Esophagus squamous epithelium (tissue), 5 donors: ENCODE measurements at regions of chr5 and their contacts with region 1.

Region 1: DNA sequence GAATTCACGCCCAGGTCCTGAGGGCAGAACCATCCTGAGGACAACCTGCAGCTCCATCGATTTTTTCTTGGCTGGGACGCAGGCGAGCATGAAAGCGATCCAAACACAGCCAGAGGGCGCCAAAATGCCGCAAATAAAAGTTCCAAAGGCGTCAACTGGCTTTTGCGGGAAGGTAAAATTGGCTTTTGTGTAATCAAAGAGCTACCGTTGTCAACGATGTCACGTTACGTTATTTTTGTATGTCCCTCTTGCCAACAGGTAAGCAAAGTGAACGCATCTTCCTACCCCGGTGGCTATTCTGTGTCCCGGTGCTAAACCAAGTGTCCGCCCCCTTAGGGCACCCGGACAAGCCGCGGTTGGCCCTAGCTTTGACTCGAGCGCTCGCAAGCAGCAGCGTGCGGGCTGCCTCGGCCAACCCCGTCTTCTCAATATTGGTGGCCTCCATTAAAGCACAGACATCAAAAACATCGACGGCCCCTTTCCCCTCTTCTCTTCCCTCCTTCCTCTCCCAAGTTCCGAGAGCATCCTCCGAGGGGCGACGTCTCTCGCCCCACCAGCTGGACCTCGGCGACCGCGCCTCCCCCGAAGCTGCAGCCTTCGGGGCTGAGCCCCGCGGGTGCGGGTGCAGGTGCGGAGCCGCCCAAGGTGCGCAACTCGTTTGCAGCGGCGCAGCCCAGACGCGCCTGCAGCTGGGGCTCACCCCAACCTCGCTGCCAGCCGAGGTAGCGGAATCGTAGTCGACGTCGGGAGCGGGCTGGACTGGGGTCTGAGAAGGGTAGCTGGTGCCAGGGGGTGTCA is 1.1 kb upstream of the BASP1 start:
- DNase-seq: peak; percentile 29
- H3K4me3 ChIP-seq: peak overlapping the region in 3 of 4 donors; percentile 64 to 77 (median 70)
- H3K27ac ChIP-seq: peak overlapping the region in 3 of 4 donors; percentile 15 to 82 (median 56)
- H3K4me1 ChIP-seq: peaks cover 8 to 31% (median 8%) of the 10 kb centered on the region in 3 donors
- H3K27me3 ChIP-seq: peaks cover 0 to 50% (median 2%) of the 10 kb centered on the region in 4 donors
- CTCF ChIP-seq: peak; percentile 67 to 86 (median 79)
- POLR2A ChIP-seq: no peak

Region 2: GRCh38 chr5:17157916-17158529 is 58.4 kb before region 1 on chr5:
- intact Hi-C with region 1: no loop called
- DNase-seq: no peak
- H3K4me3 ChIP-seq: no peak overlapping the region
- H3K27ac ChIP-seq: no peak overlapping the region
- H3K4me1 ChIP-seq: peaks cover 0 to 10% (median 0%) of the 10 kb centered on the region in 3 donors
- H3K27me3 ChIP-seq: no peaks in the 10 kb centered on the region
- CTCF ChIP-seq: peak in 1 of 6 experiments; percentile 11
- POLR2A ChIP-seq: no peak

Region 3: DNA sequence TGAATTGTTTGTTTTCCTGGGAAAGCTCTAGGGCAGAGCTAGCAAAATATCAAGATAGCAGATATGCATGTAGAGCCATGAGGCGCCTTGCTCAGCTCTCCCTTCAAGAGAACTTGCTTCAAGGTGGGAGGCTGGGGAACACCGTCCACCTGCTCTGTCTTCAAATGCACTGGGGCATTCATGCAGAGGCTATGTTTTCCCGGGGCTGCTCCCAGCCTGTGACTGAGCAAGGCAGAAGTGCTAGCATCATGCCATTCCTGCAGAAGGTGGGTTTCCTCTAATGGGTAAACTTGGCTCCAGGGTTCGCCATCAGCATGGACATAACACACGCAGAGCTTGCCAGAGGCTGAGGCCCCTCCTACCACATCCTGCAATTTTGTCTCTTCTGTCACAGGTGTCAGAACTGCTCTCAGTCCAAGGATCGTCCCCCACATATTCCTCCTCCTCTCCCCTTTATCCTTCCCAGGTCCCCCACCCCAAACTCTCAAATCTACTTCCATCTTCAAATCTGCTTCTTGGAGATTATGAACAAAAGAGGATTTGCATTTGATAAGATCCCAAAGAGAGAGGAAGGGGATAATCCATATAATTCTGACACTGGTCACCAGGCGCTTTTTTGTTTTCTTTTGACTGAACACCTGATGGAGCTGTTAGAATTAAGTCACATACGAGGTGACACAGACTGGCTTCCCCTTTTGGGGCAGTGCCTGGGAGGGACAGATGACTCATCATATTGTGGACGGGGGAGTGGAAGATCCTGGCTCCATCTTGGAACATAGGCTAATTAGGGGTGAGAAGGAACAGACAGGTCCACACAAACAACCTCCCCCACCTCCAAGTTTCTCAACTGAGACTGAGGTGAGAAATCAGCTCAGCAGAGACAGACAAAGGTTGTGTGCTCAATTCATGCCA is 196.6 kb after region 1 on chr5:
- intact Hi-C with region 1: no loop called
- DNase-seq: no peak
- H3K4me3 ChIP-seq: no peak overlapping the region
- H3K27ac ChIP-seq: no peak overlapping the region
- H3K4me1 ChIP-seq: no peaks in the 10 kb centered on the region
- H3K27me3 ChIP-seq: no peaks in the 10 kb centered on the region
- CTCF ChIP-seq: no peak
- POLR2A ChIP-seq: no peak

Region 4: GRCh38 chr5:18305297-18305924 is 1089.0 kb after region 1 on chr5:
- intact Hi-C with region 1: loop called (anchors 5 kb)
- DNase-seq: no peak
- H3K4me3 ChIP-seq: no peak overlapping the region
- H3K27ac ChIP-seq: no peak overlapping the region
- H3K4me1 ChIP-seq: no peaks in the 10 kb centered on the region
- H3K27me3 ChIP-seq: peaks cover 0 to 7% (median 0%) of the 10 kb centered on the region in 4 donors
- CTCF ChIP-seq: peak in 5 of 6 experiments; percentile 54 to 72 (median 68)
- POLR2A ChIP-seq: no peak